IMR-90 (cell line): ENCODE measurements at regions of chr3 and their contacts with region 1.

Region 1: DNA sequence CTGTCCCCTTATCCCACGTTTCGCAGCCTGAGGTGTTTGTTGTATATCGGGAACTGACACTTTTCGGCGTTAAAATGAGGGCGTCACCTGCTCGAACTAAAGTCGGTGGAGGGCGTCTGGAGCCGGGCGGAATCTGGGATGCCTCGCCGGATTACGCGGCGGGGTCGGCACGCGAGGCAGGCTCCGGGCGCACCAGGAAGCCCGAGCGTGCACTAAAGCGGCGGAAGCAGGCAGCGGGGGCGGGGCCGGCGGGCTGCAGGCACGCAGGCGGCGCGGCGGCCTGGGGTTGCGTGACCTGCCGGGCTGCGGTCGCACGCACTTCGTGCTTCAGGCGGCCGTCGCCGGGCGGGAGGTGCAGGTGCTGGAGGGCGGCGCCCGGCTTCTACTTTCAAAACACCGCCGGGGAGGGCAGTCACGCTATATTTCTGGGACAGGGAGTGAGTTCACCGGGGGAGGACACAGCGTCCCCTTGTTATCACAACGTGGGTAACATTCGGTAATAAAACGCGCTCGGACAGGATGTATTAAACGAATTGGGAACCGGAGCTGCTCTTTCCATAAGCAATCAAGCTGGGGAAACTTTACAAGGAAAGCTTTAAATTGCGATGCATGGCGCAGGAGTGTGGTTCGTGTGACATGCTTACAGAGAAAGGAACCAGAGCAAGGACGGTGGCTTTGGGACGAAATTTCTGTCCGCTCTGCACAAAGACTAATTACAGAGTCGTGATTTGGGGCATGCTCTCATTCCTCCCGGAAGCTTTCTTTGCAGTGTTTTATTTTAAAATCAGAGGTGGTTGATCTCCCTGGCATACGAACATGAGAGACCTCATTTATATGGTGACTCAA is 9.1 kb upstream of the LEKR1 start:
- DNase-seq: peak; percentile 90
- ATAC-seq: peak; percentile 70
- H3K4me3 ChIP-seq: peak overlapping the region; percentile 44
- H3K27ac ChIP-seq: peak overlapping the region; percentile 96
- H3K4me1 ChIP-seq: peaks cover 24% of the 10 kb centered on the region
- H3K27me3 ChIP-seq: no peaks in the 10 kb centered on the region
- CTCF ChIP-seq: peak; percentile 30
- POLR2A ChIP-seq: peak; percentile 69; the same call in 1 of the 2 replicates
- RAD21 ChIP-seq: peak; percentile 37; the same call in 1 of the 2 replicates

Region 2: DNA sequence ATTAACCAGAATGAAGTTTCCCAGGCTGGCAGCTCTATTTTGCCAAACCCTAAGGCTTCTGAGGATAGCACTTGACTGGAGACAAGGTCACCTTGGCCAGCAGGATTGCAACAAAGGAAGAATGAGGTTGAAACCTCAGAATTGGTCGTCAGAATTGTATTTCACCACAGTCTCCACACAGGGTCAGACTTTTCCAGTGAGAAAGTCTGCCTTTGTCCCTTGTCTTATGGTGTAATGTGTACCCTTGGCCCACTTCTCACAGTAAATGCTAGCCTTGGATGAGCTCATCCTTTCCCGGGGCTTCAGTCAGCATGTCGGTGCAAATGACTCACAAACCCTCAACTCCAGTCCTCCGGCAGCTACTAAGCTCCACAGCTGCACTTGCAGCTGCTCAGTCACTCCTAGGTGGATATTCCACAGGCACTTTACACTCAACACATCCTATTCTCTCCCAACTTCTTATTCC is 281.8 kb before region 1 on chr3:
- CTCF ChIA-PET with region 1: no interaction called
- POLR2A ChIA-PET with region 1: no interaction called
- dilution Hi-C with region 1: no loop called
- in situ Hi-C with region 1: no loop called
- intact Hi-C with region 1: loop called (anchors 5 kb)
- DNase-seq: peak; percentile 100
- ATAC-seq: peak; percentile 88
- H3K4me3 ChIP-seq: no peak overlapping the region
- H3K27ac ChIP-seq: peak overlapping the region; percentile 28; the same call in 1 of the 2 replicates
- H3K4me1 ChIP-seq: peaks cover 18% of the 10 kb centered on the region
- H3K27me3 ChIP-seq: no peaks in the 10 kb centered on the region
- CTCF ChIP-seq: peak; percentile 53
- POLR2A ChIP-seq: peak; percentile 74
- RAD21 ChIP-seq: peak; percentile 61

Region 3: GRCh38 chr3:156674046-156674910 is 142.7 kb before region 1 on chr3 and contains the start of gene TIPARP:
- CTCF ChIA-PET with region 1: interaction called, 3 read pairs
- POLR2A ChIA-PET with region 1: no interaction called
- dilution Hi-C with region 1: no loop called
- in situ Hi-C with region 1: no loop called
- intact Hi-C with region 1: loop called (anchors 2 kb)
- DNase-seq: peak; percentile 96
- ATAC-seq: peak; percentile 94
- H3K4me3 ChIP-seq: peak within 1 kb of the TSS; percentile 71
- H3K27ac ChIP-seq: peak within 1 kb of the TSS; percentile 62
- H3K4me1 ChIP-seq: peaks cover 7% of the 10 kb centered on the region
- H3K27me3 ChIP-seq: no peaks in the 10 kb centered on the region
- CTCF ChIP-seq: peak; percentile 58
- POLR2A ChIP-seq: peak; percentile 99
- RAD21 ChIP-seq: peak; percentile 59
- total RNA-seq, gene TIPARP: 70.8 and 76.4 TPM in 2 replicates

Region 4: GRCh38 chr3:156691920-156692319 is 125.1 kb before region 1 on chr3:
- CTCF ChIA-PET with region 1: no interaction called
- POLR2A ChIA-PET with region 1: no interaction called
- dilution Hi-C with region 1: no loop called
- in situ Hi-C with region 1: loop called (anchors 5 kb)
- intact Hi-C with region 1: loop called (anchors 5 kb)
- DNase-seq: peak; percentile 89
- ATAC-seq: peak; percentile 64
- H3K4me3 ChIP-seq: no peak overlapping the region
- H3K27ac ChIP-seq: peak overlapping the region; percentile 71; the same call in 1 of the 2 replicates
- H3K4me1 ChIP-seq: peaks cover 32% of the 10 kb centered on the region
- H3K27me3 ChIP-seq: no peaks in the 10 kb centered on the region
- CTCF ChIP-seq: no peak
- POLR2A ChIP-seq: peak; percentile 21; the same call in 1 of the 2 replicates
- RAD21 ChIP-seq: no peak

Region 5: GRCh38 chr3:157081681-157082210 is 264.7 kb after region 1 on chr3:
- CTCF ChIA-PET with region 1: interaction called, 5 read pairs
- POLR2A ChIA-PET with region 1: no interaction called
- dilution Hi-C with region 1: no loop called
- in situ Hi-C with region 1: loop called (anchors 5 kb)
- intact Hi-C with region 1: loop called (anchors 2 kb)
- DNase-seq: peak; percentile 94
- ATAC-seq: peak; percentile 97
- H3K4me3 ChIP-seq: no peak overlapping the region
- H3K27ac ChIP-seq: no peak overlapping the region
- H3K4me1 ChIP-seq: peaks cover 15% of the 10 kb centered on the region
- H3K27me3 ChIP-seq: no peaks in the 10 kb centered on the region
- CTCF ChIP-seq: peak; percentile 96
- POLR2A ChIP-seq: peak; percentile 82
- RAD21 ChIP-seq: peak; percentile 98